ENCODE measurements at regions of chr2 and their contacts with region 1.

Region 1: GRCh38 chr2:225282858-225283710 is 116.4 kb upstream of the NYAP2 start:
- DNase-seq: no peak
- ATAC-seq: peak; percentile 96
- H3K4me3 ChIP-seq: no peak overlapping the region
- H3K27ac ChIP-seq: no peak overlapping the region
- H3K4me1 ChIP-seq: no peaks in the 10 kb centered on the region
- H3K27me3 ChIP-seq: no peaks in the 10 kb centered on the region
- CTCF ChIP-seq: peak; percentile 75 to 87 (median 86)
- EP300 ChIP-seq: no peak
- POLR2A ChIP-seq: no peak
- RAD21 ChIP-seq: peak; percentile 66

Region 2: DNA sequence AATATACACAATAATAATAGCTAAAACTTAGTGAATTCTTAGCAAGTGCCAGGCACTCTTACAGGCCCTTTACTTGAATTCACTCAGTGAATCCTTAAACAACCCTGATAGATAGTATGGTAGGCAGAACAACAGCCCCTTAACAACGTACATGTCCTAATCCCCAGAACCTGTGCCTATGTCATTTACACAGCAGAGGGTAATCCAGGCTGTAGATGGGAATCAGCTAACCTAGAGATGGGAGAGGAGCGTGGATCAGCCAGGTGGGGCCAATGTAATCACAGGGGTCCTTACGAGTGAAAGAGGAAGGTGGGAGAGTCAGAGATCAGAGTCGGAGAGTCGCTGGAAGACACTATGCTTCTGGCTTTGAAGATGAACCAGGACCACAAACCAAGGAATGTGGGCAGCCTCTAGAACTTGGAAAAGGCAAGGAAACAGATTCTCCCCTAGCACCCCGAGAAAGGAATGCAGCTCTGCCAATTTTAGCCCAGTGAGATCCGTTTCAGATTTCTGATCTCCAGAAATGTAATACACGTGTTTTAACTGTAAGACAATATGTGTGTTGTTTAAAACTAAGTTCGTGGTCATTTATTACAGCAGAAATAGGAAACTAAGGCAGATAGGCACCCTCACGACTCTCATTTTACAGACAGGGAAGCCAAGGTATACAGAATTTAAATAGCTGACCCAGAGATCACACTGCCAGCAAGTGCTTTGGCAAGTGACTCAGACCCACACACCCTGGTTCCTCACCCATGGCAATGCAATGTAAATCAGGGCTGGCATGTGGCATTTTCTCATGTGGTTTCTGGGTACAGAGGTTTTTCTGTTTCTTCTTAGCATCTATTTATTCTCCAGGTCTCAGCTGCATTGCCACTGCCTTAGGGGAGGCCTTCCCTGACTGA is 309.7 kb before region 1 on chr2:
- CTCF ChIA-PET with region 1: no interaction called
- POLR2A ChIA-PET with region 1: no interaction called
- RAD21 ChIA-PET with region 1: no interaction called
- SMC1A ChIA-PET with region 1: no interaction called
- in situ Hi-C with region 1: no loop called
- intact Hi-C with region 1: no loop called
- DNase-seq: no peak
- ATAC-seq: peak; percentile 59
- H3K4me3 ChIP-seq: no peak overlapping the region
- H3K27ac ChIP-seq: no peak overlapping the region
- H3K4me1 ChIP-seq: peaks cover 32% of the 10 kb centered on the region
- H3K27me3 ChIP-seq: no peaks in the 10 kb centered on the region
- CTCF ChIP-seq: no peak
- EP300 ChIP-seq: no peak
- POLR2A ChIP-seq: no peak
- RAD21 ChIP-seq: no peak

Region 3: GRCh38 chr2:225270861-225271260 is 12.2 kb before region 1 on chr2:
- CTCF ChIA-PET with region 1: interaction called, 13 read pairs
- POLR2A ChIA-PET with region 1: interaction called, 3 read pairs
- RAD21 ChIA-PET with region 1: interaction called, 3 read pairs
- SMC1A ChIA-PET with region 1: interaction called, 4 read pairs
- in situ Hi-C with region 1: no loop called
- intact Hi-C with region 1: no loop called
- DNase-seq: peak; percentile 82
- ATAC-seq: peak; percentile 97
- H3K4me3 ChIP-seq: no peak overlapping the region; the same call in 1 of the 2 replicates
- H3K27ac ChIP-seq: peak overlapping the region; percentile 42; the same call in 1 of the 2 replicates
- H3K4me1 ChIP-seq: peaks cover 23% of the 10 kb centered on the region
- H3K27me3 ChIP-seq: no peaks in the 10 kb centered on the region
- CTCF ChIP-seq: peak in 1 of 3 experiments; percentile 8; a peak in 1 of 6 replicates
- EP300 ChIP-seq: peak in 1 of 2 experiments; percentile 91; a peak in 2 of 4 replicates
- POLR2A ChIP-seq: no peak
- RAD21 ChIP-seq: no peak

Region 4: GRCh38 chr2:225295102-225295501 is 12.0 kb after region 1 on chr2:
- CTCF ChIA-PET with region 1: interaction called, 10 read pairs
- POLR2A ChIA-PET with region 1: no interaction called
- RAD21 ChIA-PET with region 1: no interaction called
- SMC1A ChIA-PET with region 1: interaction called, 5 read pairs
- in situ Hi-C with region 1: no loop called
- intact Hi-C with region 1: no loop called
- DNase-seq: no peak
- ATAC-seq: no peak
- H3K4me3 ChIP-seq: no peak overlapping the region
- H3K27ac ChIP-seq: no peak overlapping the region
- H3K4me1 ChIP-seq: no peaks in the 10 kb centered on the region
- H3K27me3 ChIP-seq: no peaks in the 10 kb centered on the region
- CTCF ChIP-seq: no peak
- EP300 ChIP-seq: no peak
- POLR2A ChIP-seq: no peak
- RAD21 ChIP-seq: no peak

Region 5: DNA sequence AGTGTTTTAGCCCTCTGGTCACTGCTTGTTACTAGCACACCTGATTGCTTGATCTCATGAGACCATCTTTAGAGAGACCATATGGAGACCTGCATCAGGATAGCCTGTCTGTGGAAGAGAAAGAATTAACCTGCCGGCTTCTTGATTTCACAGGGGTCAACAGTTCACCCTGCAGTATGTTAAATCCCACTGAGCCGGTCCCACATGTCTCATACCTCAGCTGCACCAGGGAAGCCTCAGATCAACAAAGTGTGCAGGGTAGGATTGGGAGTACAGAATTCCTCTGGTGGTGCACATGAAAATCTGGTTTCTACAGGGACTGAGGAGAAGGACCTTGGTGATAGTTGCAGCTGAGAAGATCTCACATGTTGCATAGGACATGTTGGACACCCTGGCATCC is 25.6 kb after region 1 on chr2:
- CTCF ChIA-PET with region 1: no interaction called
- POLR2A ChIA-PET with region 1: no interaction called
- RAD21 ChIA-PET with region 1: no interaction called
- SMC1A ChIA-PET with region 1: no interaction called
- in situ Hi-C with region 1: no loop called
- intact Hi-C with region 1: no loop called
- DNase-seq: no peak
- ATAC-seq: no peak
- H3K4me3 ChIP-seq: no peak overlapping the region
- H3K27ac ChIP-seq: no peak overlapping the region
- H3K4me1 ChIP-seq: no peaks in the 10 kb centered on the region
- H3K27me3 ChIP-seq: no peaks in the 10 kb centered on the region
- CTCF ChIP-seq: no peak
- EP300 ChIP-seq: no peak
- POLR2A ChIP-seq: no peak
- RAD21 ChIP-seq: no peak

Region 6: DNA sequence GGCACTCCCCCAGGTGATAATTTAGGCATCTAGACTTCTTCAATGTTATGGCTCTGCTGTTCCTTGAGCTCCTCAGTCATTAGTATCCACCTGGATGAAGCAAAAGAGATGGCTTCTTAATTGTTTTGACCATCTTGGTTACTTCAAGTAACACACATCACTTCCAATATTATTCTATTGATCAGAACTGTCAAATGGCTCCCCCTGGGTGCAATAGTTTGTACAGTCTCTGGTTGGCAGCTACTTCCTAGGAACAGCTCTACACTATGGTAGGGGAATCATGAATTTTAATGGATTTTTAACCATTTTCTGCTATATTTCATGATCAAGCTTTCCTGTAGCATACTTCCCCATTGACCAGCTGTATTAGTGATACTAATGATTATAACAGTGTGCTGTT is 273.4 kb after region 1 on chr2:
- CTCF ChIA-PET with region 1: interaction called, 16 read pairs
- POLR2A ChIA-PET with region 1: no interaction called
- RAD21 ChIA-PET with region 1: interaction called, 3 read pairs
- SMC1A ChIA-PET with region 1: interaction called, 3 read pairs
- in situ Hi-C with region 1: no loop called
- intact Hi-C with region 1: no loop called
- DNase-seq: no peak
- ATAC-seq: peak; percentile 40; the same call in 2 of the 3 replicates
- H3K4me3 ChIP-seq: no peak overlapping the region
- H3K27ac ChIP-seq: no peak overlapping the region
- H3K4me1 ChIP-seq: no peaks in the 10 kb centered on the region
- H3K27me3 ChIP-seq: no peaks in the 10 kb centered on the region
- CTCF ChIP-seq: no peak; a peak in 1 of 6 replicates
- EP300 ChIP-seq: no peak
- POLR2A ChIP-seq: no peak
- RAD21 ChIP-seq: no peak

Region 7: DNA sequence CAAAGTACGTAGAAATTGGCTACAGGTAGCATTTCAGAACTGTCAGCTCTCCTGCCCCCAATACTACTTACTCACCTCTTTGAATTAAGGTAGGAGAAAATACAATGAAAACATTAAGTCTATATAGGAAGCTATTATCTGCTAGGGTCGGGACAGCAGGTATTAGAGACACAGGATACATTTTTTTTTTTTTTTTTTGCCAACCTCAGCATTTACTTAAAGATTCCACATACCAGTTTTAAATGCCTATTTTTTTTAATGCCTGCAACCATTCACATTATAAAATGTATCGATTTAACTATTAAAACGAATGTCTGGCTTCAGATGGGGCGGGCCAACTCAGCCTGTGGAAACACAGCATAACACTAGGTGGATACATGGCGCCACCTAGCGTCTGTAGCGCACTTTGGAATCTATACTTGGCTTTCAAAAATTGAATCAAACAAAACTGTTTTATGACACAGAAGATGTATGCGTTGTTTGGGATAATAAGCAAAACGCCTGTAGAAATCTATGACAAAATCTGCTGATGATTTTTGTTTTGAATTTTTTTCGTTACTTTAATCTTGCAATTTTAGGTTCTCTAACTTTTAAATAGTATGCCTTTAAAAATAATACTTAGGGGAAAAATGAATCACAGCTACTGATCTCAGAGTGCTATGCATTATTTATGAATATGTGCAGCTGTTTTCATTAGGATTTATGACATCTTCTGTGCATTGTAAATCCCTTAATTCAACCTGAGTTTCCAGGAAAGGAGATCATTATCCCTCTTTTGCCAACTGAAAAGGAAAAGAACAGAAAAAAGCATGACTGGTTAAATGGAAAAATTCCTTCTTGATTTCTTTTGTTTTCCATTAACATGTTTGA is 377.4 kb after region 1 on chr2:
- CTCF ChIA-PET with region 1: interaction called, 29 read pairs
- POLR2A ChIA-PET with region 1: interaction called, 4 read pairs
- RAD21 ChIA-PET with region 1: interaction called, 12 read pairs
- SMC1A ChIA-PET with region 1: interaction called, 19 read pairs
- in situ Hi-C with region 1: no loop called
- intact Hi-C with region 1: loop called (anchors 1 kb)
- DNase-seq: peak; percentile 9
- ATAC-seq: peak; percentile 95
- H3K4me3 ChIP-seq: no peak overlapping the region
- H3K27ac ChIP-seq: no peak overlapping the region
- H3K4me1 ChIP-seq: no peaks in the 10 kb centered on the region
- H3K27me3 ChIP-seq: no peaks in the 10 kb centered on the region
- CTCF ChIP-seq: peak; percentile 85 to 90 (median 86)
- EP300 ChIP-seq: no peak
- POLR2A ChIP-seq: no peak
- RAD21 ChIP-seq: peak; percentile 94